ENCODE measurements at regions of chr5 and their contacts with region 1.

Region 1: GRCh38 chr5:8686707-8687106 is 817.8 kb downstream of the MTRR start:
- DNase-seq: peak in 1 of 2 donors; percentile 70
- H3K4me3 ChIP-seq: peak overlapping the region in 1 of 2 donors; percentile 39
- H3K27ac ChIP-seq: peak overlapping the region; percentile 52 to 57
- H3K4me1 ChIP-seq: peaks cover 0 to 9% of the 10 kb centered on the region in 2 donors
- H3K27me3 ChIP-seq: no peaks in the 10 kb centered on the region
- CTCF ChIP-seq: no peak

Region 2: GRCh38 chr5:7904170-7904569 is 782.5 kb before region 1 on chr5:
- intact Hi-C with region 1: loop called (anchors 10 kb)
- DNase-seq: no peak
- H3K4me3 ChIP-seq: no peak overlapping the region
- H3K27ac ChIP-seq: no peak overlapping the region
- H3K4me1 ChIP-seq: no peaks in the 10 kb centered on the region
- H3K27me3 ChIP-seq: no peaks in the 10 kb centered on the region
- CTCF ChIP-seq: no peak